SK-N-SH (cell line): ENCODE measurements at regions of chr1 and their contacts with region 1.

Region 1: DNA sequence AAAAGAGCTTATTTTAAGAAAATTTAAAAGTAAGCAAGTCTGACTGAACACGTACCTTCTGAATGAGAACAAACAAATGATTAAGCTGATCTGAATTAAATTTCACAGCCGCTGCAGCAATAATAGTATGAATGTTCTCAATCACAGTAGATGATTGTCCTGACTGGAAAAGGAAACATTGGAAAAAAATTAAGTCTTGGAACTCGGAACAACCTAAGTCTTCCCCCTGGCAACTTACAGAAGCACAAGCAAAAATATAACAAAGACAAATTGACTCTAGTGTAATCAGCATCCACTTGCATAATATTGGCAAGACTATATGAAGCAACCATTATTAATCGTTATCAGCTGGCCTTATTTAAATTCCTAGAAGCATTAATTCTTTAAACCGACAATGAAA is 60.5 kb downstream of the USP24 start:
- DNase-seq: no peak
- H3K4me3 ChIP-seq: no peak overlapping the region
- H3K27ac ChIP-seq: no peak overlapping the region
- H3K4me1 ChIP-seq: peaks cover 0 to 2% of the 10 kb centered on the region in 2 experiments; a peak in 1 of 4 replicates
- H3K27me3 ChIP-seq: no peaks in the 10 kb centered on the region
- CTCF ChIP-seq: no peak
- EP300 ChIP-seq: no peak
- RAD21 ChIP-seq: no peak

Region 2: DNA sequence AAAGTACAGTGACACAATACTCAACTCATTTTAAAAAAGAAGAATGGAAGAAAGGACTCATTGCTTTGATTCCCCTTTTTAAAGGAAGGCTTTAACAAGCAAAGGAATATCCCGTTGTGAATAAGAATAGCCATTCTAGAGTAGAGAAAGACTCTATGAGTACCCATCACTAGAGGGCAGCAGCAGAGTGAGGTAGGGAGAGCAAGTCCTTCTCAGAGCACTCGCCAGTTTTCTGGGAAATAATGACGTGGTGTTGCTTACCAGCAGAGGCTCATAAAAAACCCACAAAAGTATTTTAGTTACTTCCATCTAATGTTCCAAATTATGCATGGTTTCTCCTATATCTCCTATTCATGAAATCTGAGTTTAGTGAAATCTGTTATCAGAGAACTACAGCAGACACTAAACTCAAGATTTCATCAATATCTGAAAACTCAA is 14.1 kb before region 1 on chr1:
- CTCF ChIA-PET with region 1: interaction called, 10 read pairs
- POLR2A ChIA-PET with region 1: no interaction called
- DNase-seq: peak; percentile 55
- H3K4me3 ChIP-seq: peak overlapping the region in 1 of 2 experiments; percentile 14; a peak in 1 of 4 replicates
- H3K27ac ChIP-seq: peak overlapping the region in 1 of 2 experiments; percentile 72; a peak in 2 of 4 replicates
- H3K4me1 ChIP-seq: peaks cover 0 to 3% of the 10 kb centered on the region in 2 experiments; a peak in 1 of 4 replicates
- H3K27me3 ChIP-seq: no peaks in the 10 kb centered on the region
- CTCF ChIP-seq: peak; percentile 89
- EP300 ChIP-seq: no peak
- RAD21 ChIP-seq: peak; percentile 90